Activated CD4-positive, alpha-beta T cell treated with anti-CD3 and anti-CD28 coated beads, Interleukin-2, amount 10 ng/mL, durations not matched to agents 24 days and 14 days (primary cell): ENCODE measurements at regions of chr7 and their contacts with region 1.

Region 1: DNA sequence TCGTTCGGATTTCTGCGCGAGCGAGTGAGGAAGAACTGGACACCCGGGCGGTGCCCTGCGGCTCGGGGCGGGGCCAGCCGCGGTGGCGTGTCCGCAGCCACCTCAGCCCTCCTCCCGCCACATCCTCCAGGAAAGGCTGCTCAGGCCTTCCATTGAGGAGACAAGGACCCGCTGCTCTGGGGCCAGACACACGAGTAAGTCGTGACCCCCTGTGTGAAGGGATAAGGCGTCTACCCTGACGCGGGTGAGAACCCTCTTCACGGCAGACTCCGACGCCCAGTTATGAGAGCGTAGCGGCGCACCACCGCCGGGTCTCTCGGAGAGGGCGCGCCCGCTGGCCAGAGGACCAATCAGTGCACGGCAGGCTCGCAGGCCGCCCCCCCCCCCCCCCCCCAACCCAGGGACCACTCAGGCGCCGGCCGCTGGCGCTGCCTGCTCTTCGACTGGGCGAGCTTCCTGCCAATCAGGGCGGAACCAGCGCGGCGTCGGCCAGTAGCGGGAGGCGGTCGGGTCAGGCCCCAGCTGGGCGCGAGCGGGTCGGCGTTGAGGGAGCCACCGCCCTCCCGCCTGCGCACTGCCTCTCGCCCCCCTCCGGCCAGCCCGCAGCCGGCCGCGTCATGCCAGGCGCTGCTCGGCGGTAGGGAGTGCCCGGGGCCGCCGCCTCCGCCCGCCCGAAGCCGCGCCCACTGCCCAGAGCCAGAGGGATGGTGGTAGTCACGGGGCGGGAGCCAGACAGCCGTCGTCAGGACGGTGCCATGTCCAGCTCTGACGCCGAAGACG is at the start of gene KCTD7:
- DNase-seq: peak; percentile 98
- H3K4me3 Mint-ChIP-seq: peak within 1 kb of the TSS; percentile 90
- H3K27ac Mint-ChIP-seq: peak within 1 kb of the TSS; percentile 84
- H3K4me1 Mint-ChIP-seq: peaks cover 44% of the 10 kb centered on the region
- H3K27me3 Mint-ChIP-seq: no peaks in the 10 kb centered on the region
- total RNA-seq, gene KCTD7: 8.9 and 9.2 TPM in 2 replicates

Region 2: DNA sequence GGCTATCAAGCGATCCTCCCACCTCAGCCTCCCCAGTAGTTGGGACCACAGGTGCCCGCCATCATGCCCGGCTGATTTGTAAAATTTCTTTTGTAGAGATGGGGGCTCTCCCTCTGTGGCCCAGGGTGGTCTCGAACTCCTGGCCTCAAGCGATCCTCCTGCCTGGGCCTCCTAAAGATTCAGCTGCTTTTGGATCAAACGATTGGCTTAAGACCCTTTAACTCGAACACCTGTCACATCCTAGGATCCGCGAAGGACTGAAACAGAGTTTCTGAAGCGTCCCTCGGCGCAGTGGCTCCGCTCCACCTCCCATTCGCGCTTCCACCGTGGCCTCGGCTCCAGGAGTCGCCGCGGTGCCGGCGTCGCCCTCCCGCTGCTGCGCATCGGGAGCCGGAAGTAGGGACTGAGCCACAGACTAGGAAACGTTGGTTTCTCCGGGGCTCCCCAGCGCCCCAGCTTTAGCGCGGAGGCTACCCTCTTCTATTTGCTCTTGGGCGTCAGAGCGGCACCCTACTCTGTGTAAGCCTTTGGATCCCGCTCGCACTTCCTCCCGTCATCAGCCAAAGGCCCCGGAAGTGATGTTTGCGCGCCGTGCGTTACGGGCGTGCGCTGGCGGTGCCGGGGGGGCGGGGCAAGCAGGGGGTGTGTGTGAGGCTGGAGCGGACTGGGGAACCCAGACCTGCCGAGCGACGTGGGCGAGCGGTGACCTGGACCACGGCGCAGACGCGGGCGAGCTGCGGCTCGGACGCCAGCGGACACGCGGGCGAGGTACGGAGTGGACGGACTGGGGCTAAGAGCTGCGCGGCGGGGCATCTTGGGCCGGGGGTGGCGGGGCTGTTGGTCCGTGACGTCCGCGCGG is 53.2 kb after region 1 on chr7:
- intact Hi-C with region 1: loop called (anchors 2 kb)
- DNase-seq: peak; percentile 99
- H3K4me3 Mint-ChIP-seq: peak overlapping the region; percentile 93
- H3K27ac Mint-ChIP-seq: peak overlapping the region; percentile 92
- H3K4me1 Mint-ChIP-seq: peaks cover 19% of the 10 kb centered on the region
- H3K27me3 Mint-ChIP-seq: no peaks in the 10 kb centered on the region